HCT116 (cell line): ENCODE measurements at regions of chr11 and their contacts with region 1.

Region 1: GRCh38 chr11:64165849-64166635 is at the start of gene MACROD1:
- DNase-seq: peak; percentile 71
- ATAC-seq: peak; percentile 84
- H3K4me3 ChIP-seq: peak within 1 kb of the TSS; percentile 73 to 76
- H3K27ac ChIP-seq: peak within 1 kb of the TSS; percentile 85
- H3K4me1 ChIP-seq: peaks cover 14 to 45% of the 10 kb centered on the region in 2 experiments; a peak in 3 of 4 replicates
- H3K27me3 ChIP-seq: no peaks in the 10 kb centered on the region
- CTCF ChIP-seq: no peak
- POLR2A ChIP-seq: peak; percentile 77
- RAD21 ChIP-seq: no peak
- total RNA-seq, gene MACROD1: 61.1 TPM

Region 2: DNA sequence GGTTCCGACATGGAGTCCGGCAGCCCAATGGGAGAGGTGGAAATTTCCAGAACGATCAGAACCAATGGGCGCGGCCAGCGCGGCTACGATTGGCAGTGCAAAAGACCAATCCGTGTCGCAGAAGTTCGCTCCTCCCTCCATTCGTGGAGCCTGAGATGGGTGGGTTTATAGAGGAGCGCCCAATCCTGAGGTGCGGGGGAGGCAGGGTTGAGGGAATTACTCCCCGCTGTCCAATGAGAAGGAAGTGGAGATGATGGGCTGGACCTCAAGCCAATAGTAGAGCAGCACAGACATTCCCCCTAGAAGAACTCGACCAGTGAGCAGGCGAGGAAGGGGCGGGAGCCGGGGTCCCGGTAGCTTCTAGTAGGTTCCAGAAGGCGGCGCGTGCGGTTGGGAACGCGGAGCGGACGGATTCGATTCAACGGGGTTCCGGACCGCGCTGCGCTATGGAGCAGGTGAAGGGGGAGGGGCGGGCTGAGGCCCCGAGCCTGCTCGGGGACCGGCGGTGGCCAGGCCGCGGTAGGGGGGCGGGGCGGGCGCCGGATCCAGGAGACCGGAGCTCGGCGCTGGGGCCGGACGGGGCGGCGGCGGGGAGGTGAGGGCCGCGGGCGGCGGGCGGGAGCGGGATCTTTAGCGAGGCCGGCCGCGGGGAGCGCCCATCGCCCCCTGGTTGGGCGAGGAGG is 19.9 kb after region 1 on chr11 and contains the start of gene STIP1:
- CTCF ChIA-PET with region 1: no interaction called
- POLR2A ChIA-PET with region 1: interaction called, 10 read pairs
- RAD21 ChIA-PET with region 1: no interaction called
- intact Hi-C with region 1: no loop called
- DNase-seq: peak; percentile 100
- ATAC-seq: peak; percentile 87
- H3K4me3 ChIP-seq: peak within 1 kb of the TSS; percentile 81 to 88
- H3K27ac ChIP-seq: peak within 1 kb of the TSS; percentile 90
- H3K4me1 ChIP-seq: peaks cover 26 to 48% of the 10 kb centered on the region in 2 experiments
- H3K27me3 ChIP-seq: no peaks in the 10 kb centered on the region
- CTCF ChIP-seq: peak in 2 of 3 experiments; percentile 15 to 29; a peak in 1 of 6 replicates
- POLR2A ChIP-seq: peak; percentile 19
- RAD21 ChIP-seq: no peak
- total RNA-seq, gene STIP1: 336 TPM

Region 3: GRCh38 chr11:64675450-64676260 is 509.6 kb after region 1 on chr11:
- CTCF ChIA-PET with region 1: no interaction called
- POLR2A ChIA-PET with region 1: no interaction called
- RAD21 ChIA-PET with region 1: no interaction called
- intact Hi-C with region 1: no loop called
- DNase-seq: no peak
- ATAC-seq: no peak
- H3K4me3 ChIP-seq: no peak overlapping the region
- H3K27ac ChIP-seq: no peak overlapping the region
- H3K4me1 ChIP-seq: peaks cover 0 to 15% of the 10 kb centered on the region in 2 experiments; a peak in 1 of 4 replicates
- H3K27me3 ChIP-seq: peaks cover 48% of the 10 kb centered on the region; the same call in 1 of the 2 replicates
- CTCF ChIP-seq: no peak
- POLR2A ChIP-seq: no peak
- RAD21 ChIP-seq: no peak